Posterior cingulate gyrus (tissue), 11 donors: ENCODE measurements at regions of chr17 and their contacts with region 1.

Region 1: GRCh38 chr17:48724251-48725003 is 1.4 kb downstream of the PRAC2 start:
- DNase-seq: peak; percentile 43 to 95 (median 74)

Region 2: GRCh38 chr17:48505787-48506645 is 218.4 kb before region 1 on chr17:
- intact Hi-C with region 1: no loop called
- DNase-seq: no peak

Region 3: DNA sequence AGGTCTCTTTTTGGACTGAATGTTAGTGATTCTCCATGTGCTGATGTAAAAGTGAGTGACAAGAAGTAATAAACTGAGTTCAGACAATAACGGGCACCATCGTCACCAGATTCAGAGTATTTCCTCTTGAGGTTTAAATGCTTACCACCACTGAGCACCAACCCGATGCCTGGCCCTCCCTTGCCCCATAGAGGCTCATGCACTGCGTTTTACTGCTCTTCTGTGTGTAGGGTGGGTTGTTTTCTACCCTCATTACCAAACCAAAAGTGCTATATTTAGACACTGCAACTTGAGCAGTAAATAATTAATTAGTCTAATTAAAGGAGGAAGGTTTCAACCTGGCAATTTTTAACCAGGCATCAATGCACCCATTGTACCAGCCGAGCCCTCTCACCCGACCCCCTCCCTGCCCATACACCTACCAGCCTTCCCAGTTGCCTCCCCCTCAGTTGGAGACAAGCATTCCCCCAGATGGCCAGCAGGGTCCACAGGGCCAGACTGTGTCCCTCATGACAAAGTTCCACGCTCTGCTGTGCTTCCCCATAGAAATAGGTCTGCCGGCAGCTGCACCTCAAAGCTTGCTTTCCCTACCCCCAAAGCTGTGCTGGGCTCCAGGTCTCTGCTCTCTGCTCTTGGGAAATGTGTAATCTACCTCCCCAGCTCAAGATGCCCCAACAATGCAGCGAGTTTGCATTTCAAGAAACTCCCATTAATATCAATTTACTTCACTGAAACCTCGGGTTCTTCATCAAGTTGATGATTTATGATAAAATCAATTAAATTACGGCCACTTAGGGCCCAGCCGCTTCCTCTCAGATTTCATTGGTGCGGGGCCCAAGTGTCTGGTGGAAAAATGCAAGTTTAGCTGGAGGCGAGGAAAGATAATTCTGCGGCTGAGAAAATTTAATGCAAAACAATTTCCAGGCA is 162.3 kb before region 1 on chr17:
- intact Hi-C with region 1: no loop called
- DNase-seq: no peak

Region 4: DNA sequence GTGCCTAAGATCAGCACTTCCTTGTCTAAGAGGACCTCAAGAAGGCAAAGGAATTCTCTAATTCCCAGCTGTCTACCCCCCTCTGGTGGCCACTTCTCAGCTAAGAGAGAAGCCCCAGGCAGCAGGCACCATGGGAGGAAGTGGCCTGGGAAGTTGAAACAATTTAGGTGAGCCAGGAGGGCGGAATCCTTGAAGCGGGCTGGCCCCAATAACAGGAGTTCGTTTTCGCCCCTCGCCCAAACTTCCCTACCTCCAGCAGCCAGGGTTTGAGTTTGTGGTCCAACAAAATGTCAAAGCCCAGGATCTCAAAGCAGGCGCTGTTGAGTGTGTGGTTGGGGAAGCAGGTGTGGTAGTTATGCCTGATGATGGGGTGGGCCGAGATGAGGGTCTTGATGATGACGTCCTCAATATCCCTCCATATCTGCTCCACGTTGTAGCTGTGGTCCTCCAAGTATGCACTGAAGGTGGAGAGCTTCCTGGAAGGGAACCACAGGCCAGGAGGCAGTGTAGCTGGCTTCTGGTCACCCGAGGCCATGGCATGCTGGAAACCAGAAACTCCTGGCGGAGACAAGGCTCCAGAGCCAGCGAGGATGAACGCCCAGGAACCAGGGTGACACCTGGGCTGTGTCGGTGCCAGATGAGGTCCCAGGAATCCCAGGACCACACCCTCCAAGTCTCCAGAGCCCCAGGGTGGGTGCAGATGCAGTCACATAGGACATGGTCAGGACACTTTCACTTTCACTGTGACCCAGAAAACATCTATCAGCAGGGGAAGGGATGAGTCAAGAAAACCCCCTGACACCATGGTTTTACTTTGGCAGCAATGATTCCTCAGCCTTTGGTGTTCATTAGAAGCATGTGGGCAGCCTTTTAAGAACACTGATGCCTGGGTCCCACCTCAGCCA is 67.0 kb after region 1 on chr17:
- intact Hi-C with region 1: loop called (anchors 10 kb)
- DNase-seq: peak in 5 of 10 donors; percentile 19 to 61 (median 39)

Region 5: DNA sequence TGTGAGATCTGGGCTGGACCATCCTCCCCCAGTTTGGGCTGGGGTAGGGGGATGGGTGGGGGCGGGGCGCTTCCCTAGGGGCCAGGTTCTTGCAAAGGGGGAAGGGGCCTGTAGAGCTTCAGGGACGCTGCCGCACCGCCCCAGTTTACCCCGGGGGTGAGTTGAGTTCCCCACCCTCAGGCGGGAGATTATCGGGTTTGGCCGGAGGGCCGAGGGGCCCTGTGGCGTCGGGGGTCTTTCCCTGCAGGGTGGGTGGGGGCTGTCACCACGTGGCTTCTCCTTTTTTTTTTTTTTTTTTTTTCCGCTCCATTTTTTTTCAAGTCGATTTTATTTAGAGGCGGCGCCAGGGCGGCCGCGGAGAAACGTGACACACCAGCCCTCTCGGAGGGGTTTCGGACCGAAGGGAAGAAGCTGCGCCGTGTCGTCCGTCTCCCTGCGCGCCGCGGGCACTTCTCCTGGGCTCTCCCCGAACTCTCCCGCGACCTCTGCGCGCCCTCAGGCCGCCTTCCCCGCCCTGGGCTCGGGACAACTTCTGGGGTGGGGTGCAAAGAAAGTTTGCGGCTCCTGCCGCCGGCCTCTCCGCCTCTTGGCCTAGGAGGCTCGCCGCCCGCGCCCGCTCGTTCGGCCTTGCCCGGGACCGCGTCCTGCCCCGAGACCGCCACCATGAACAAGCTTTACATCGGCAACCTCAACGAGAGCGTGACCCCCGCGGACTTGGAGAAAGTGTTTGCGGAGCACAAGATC is 272.8 kb after region 1 on chr17 and contains the start of gene IGF2BP1:
- intact Hi-C with region 1: loop called (anchors 10 kb)
- DNase-seq: peak in 1 of 10 donors; percentile 39